ENCODE measurements at regions of chr19 and their contacts with region 1.

Region 1: DNA sequence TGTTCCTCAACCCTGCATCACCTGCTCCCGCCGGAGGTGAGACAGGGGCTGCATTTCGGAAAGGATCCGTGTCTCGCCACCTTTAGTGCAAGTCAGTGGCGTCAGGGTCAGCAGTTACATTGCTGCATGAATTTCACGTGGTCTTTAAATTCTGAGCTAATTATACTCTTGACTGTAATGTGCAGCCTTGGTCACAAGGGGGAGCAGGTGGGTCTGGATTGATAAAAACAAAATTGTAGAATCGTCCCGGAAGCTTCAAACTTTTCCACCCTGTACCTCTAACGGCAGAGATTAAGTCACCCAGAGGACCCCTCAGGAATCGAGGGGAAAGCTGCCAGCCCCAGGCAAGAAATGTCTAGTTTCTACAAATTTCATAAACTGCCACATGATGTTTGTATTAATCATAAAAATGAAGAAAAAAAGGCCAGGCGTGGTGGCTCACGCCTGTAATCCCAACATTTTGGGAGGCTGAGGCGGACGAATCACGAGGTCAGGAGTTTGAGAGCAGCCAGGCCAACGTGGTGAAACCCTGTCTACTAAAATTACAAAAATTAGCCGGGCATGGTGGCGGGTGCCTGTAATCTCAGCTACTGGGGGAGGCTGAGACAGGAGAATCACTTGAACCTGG is 20.2 kb downstream of the BBC3 start:
- DNase-seq: peak; percentile 90
- ATAC-seq: peak; percentile 85
- H3K4me3 Mint-ChIP-seq: no peak overlapping the region
- H3K27ac Mint-ChIP-seq: peak overlapping the region; percentile 92
- H3K4me1 Mint-ChIP-seq: peaks cover 11% of the 10 kb centered on the region
- H3K27me3 Mint-ChIP-seq: no peaks in the 10 kb centered on the region

Region 2: DNA sequence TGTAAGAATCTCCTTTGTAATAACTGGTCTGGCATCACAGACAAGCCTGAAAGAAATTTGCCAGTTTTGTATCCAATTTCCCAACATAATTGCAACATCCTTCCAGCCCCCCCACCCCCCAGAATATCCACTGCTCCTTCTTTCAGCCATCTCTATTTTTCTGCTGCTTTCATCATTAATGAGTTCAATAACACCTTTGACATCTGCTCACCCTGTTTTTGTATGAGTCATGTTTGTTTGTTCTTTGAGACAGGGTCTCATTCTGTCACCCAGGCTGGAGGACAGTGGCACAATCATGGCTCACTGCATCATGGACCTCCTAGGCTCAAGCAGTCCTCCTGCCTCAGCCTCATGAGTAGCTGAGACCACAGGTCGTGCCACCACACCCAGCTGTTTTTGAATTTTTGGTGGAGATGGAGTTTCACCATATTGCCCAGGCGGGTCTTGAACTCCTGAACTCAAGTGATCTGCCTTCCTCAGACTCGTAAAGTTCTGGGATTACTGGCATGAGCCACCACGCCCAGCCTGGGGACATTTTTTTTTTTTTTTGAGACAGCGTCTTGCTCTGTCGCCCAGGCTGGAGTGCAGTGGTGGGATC is 90.2 kb before region 1 on chr19:
- CTCF ChIA-PET with region 1: no interaction called
- DNase-seq: no peak
- ATAC-seq: no peak
- H3K4me3 Mint-ChIP-seq: no peak overlapping the region
- H3K27ac Mint-ChIP-seq: no peak overlapping the region
- H3K4me1 Mint-ChIP-seq: peaks cover 4% of the 10 kb centered on the region
- H3K27me3 Mint-ChIP-seq: no peaks in the 10 kb centered on the region

Region 3: GRCh38 chr19:47130591-47131227 is 80.1 kb before region 1 on chr19 and contains the start of gene SAE1:
- CTCF ChIA-PET with region 1: interaction called, 17 read pairs
- DNase-seq: peak; percentile 95
- ATAC-seq: peak; percentile 90
- H3K4me3 Mint-ChIP-seq: peak within 1 kb of the TSS; percentile 96
- H3K27ac Mint-ChIP-seq: peak within 1 kb of the TSS; percentile 98
- H3K4me1 Mint-ChIP-seq: peaks cover 46% of the 10 kb centered on the region
- H3K27me3 Mint-ChIP-seq: no peaks in the 10 kb centered on the region
- total RNA-seq, gene SAE1: 153 to 171 TPM

Region 4: GRCh38 chr19:47152224-47153017 is 58.4 kb before region 1 on chr19:
- CTCF ChIA-PET with region 1: interaction called, 35 read pairs
- DNase-seq: no peak
- ATAC-seq: no peak
- H3K4me3 Mint-ChIP-seq: no peak overlapping the region
- H3K27ac Mint-ChIP-seq: peak overlapping the region; percentile 42
- H3K4me1 Mint-ChIP-seq: peaks cover 27% of the 10 kb centered on the region
- H3K27me3 Mint-ChIP-seq: no peaks in the 10 kb centered on the region

Region 5: GRCh38 chr19:47186446-47187334 is 24.1 kb before region 1 on chr19:
- CTCF ChIA-PET with region 1: interaction called, 25 read pairs
- DNase-seq: peak; percentile 86
- ATAC-seq: peak; percentile 78
- H3K4me3 Mint-ChIP-seq: peak overlapping the region; percentile 31
- H3K27ac Mint-ChIP-seq: peak overlapping the region; percentile 88
- H3K4me1 Mint-ChIP-seq: peaks cover 73% of the 10 kb centered on the region
- H3K27me3 Mint-ChIP-seq: no peaks in the 10 kb centered on the region

Region 6: GRCh38 chr19:47225746-47226425 is 15.1 kb after region 1 on chr19:
- CTCF ChIA-PET with region 1: interaction called, 108 read pairs
- DNase-seq: peak; percentile 88
- ATAC-seq: peak; percentile 67
- H3K4me3 Mint-ChIP-seq: peak overlapping the region; percentile 75
- H3K27ac Mint-ChIP-seq: peak overlapping the region; percentile 90
- H3K4me1 Mint-ChIP-seq: peaks cover 18% of the 10 kb centered on the region
- H3K27me3 Mint-ChIP-seq: no peaks in the 10 kb centered on the region

Region 7: GRCh38 chr19:47256688-47257443 is 46.1 kb after region 1 on chr19:
- CTCF ChIA-PET with region 1: interaction called, 14 read pairs
- DNase-seq: peak; percentile 100
- ATAC-seq: peak; percentile 89
- H3K4me3 Mint-ChIP-seq: peak overlapping the region; percentile 85
- H3K27ac Mint-ChIP-seq: peak overlapping the region; percentile 92
- H3K4me1 Mint-ChIP-seq: peaks cover 24% of the 10 kb centered on the region
- H3K27me3 Mint-ChIP-seq: no peaks in the 10 kb centered on the region

Measured in activated CD8-positive, alpha-beta memory T cell treated with anti-CD3 and anti-CD28 coated beads, Interleukin-2, amount 10 ng/mL, durations not matched to agents 7 days and 5 days (primary cell).